Ovary (tissue), 10 donors: ENCODE measurements at regions of chr6 and their contacts with region 1.

Region 1: GRCh38 chr6:66376001-66376400 is 669.0 kb upstream of the EYS start:
- DNase-seq: no peak
- H3K4me3 ChIP-seq: no peak overlapping the region
- H3K27ac ChIP-seq: no peak overlapping the region
- H3K4me1 ChIP-seq: no peaks in the 10 kb centered on the region
- H3K27me3 ChIP-seq: no peaks in the 10 kb centered on the region
- CTCF ChIP-seq: no peak
- EP300 ChIP-seq: no peak
- POLR2A ChIP-seq: no peak

Region 2: GRCh38 chr6:65537600-65537999 is 838.4 kb before region 1 on chr6:
- intact Hi-C with region 1: no loop called
- DNase-seq: no peak
- H3K4me3 ChIP-seq: no peak overlapping the region
- H3K27ac ChIP-seq: no peak overlapping the region
- H3K4me1 ChIP-seq: no peaks in the 10 kb centered on the region
- H3K27me3 ChIP-seq: no peaks in the 10 kb centered on the region
- CTCF ChIP-seq: no peak
- EP300 ChIP-seq: no peak
- POLR2A ChIP-seq: no peak

Region 3: DNA sequence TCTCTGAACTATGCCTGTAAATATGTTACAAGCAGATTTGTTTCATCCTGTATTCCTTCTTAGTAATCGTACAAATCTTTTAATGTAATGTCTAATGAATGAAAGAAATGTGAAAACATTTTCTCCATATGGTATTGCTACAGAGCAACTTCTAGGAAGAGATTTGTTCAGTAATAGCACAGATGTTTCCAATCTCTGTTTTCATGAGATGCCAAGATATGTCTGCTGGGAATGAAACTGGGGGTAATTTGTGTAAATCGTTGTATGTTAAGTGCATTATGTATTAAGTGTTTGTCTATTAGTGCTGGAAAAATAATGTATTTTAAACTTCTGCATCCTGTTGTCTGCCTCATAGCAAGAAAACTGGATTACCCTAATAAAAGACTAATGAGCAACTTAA is 53.2 kb after region 1 on chr6:
- intact Hi-C with region 1: no loop called
- DNase-seq: no peak
- H3K4me3 ChIP-seq: no peak overlapping the region
- H3K27ac ChIP-seq: no peak overlapping the region
- H3K4me1 ChIP-seq: no peaks in the 10 kb centered on the region
- H3K27me3 ChIP-seq: no peaks in the 10 kb centered on the region
- CTCF ChIP-seq: no peak
- EP300 ChIP-seq: no peak
- POLR2A ChIP-seq: no peak

Region 4: GRCh38 chr6:67219346-67219745 is 843.3 kb after region 1 on chr6:
- intact Hi-C with region 1: loop called in 1 of 4 experiments (anchors 5 kb)
- DNase-seq: no peak
- H3K4me3 ChIP-seq: no peak overlapping the region
- H3K27ac ChIP-seq: no peak overlapping the region
- H3K4me1 ChIP-seq: no peaks in the 10 kb centered on the region
- H3K27me3 ChIP-seq: no peaks in the 10 kb centered on the region
- CTCF ChIP-seq: no peak
- EP300 ChIP-seq: no peak
- POLR2A ChIP-seq: no peak